K562 (cell line): ENCODE measurements at regions of chr1 and their contacts with region 1.

Region 1: DNA sequence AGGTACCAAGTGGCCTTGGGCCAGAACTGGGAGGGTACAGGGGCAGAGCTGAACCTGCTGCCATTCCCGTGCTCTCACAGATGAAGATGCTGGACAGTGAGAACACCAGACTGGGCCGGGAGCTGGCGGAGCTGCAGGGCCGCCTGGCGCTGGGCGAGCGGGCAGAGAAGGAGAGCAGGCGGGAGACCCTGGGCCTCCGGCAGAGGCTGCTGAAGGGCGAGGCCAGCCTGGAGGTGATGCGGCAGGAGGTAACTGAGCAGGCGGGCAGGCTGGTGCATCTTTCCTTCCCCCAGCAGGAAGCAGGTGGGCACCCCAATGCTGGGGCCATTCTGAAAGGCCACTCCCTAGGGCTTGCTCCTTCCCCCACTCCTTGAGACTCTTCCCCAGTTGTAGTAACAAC is 21.9 kb downstream of the MFAP2 start:
- DNase-seq: no peak
- ATAC-seq: no peak
- H3K4me3 ChIP-seq: no peak overlapping the region
- H3K27ac ChIP-seq: no peak overlapping the region
- H3K4me1 ChIP-seq: peaks cover 0 to 33% of the 10 kb centered on the region in 2 experiments; a peak in 2 of 5 replicates
- H3K27me3 ChIP-seq: peaks cover 15 to 32% of the 10 kb centered on the region in 2 experiments; a peak in 4 of 5 replicates
- CTCF ChIP-seq: no peak
- EP300 ChIP-seq: no peak
- POLR2A ChIP-seq: no peak
- RAD21 ChIP-seq: no peak

Region 2: DNA sequence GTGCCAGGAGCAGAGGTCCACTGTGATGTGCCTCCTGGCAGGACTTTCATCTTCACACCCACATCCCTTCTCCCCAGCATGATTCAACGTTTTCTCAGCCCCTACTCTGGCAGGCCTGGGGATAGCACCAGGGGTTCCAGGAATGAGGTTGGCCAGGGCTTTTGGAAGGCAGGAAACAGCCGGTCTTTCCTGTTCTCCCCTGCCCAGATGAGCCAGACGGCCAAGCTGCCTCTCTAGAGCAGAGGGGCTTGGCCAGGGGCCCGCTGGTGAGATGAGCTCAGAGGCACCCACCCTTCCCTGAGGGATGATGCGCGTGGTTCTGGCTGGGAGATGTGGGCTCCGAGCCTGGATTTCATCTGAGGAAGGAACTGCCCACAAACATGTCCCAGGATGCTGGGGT is 26.2 kb after region 1 on chr1:
- CTCF ChIA-PET with region 1: no interaction called
- POLR2A ChIA-PET with region 1: no interaction called
- in situ Hi-C with region 1: no loop called
- intact Hi-C with region 1: no loop called
- DNase-seq: no peak
- ATAC-seq: no peak
- H3K4me3 ChIP-seq: no peak overlapping the region
- H3K27ac ChIP-seq: no peak overlapping the region
- H3K4me1 ChIP-seq: peaks cover 0 to 23% of the 10 kb centered on the region in 2 experiments; a peak in 2 of 5 replicates
- H3K27me3 ChIP-seq: peaks cover 12 to 15% of the 10 kb centered on the region in 2 experiments; a peak in 3 of 5 replicates
- CTCF ChIP-seq: no peak
- EP300 ChIP-seq: no peak
- POLR2A ChIP-seq: no peak
- RAD21 ChIP-seq: no peak

Region 3: DNA sequence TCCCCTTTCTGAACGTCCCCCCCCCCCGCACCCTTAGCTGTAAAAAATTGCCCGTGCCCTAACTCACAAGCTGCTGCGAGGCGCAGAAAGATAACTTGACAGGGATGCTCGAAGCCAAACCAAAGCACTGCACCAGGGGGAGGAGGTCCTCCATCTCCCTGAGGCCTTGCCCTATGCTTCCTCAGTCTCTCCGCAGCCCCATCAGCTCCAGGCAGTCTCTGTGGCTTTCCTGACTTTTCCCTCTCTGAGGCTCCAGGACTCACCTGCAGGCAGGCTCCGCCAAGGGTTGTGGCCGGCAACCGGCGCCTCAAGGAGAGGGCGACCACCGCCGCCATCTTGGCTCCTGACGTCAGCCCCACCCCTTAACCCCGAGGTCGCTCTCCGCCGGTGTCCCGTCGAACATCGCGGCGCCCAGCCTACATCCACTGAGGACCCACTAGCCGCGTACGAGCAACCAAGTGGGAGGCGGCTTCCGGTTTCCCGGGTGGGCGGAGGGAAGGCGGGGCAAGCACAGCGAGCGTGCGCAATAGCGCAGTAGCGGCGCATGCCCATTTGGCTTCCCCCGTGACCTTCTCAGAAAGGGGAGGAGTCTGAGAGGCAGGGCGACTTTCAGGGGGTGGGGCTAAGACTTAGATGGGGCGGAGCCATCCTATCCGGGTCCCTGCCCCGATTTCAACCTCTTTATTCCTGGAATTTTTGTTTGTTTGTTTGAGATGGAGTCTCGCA is 95.3 kb after region 1 on chr1 and contains the start of gene SDHB:
- CTCF ChIA-PET with region 1: no interaction called
- POLR2A ChIA-PET with region 1: no interaction called
- in situ Hi-C with region 1: loop called (anchors 5 kb)
- intact Hi-C with region 1: no loop called
- DNase-seq: peak; percentile 99
- ATAC-seq: peak; percentile 99
- H3K4me3 ChIP-seq: peak within 1 kb of the TSS; percentile 53
- H3K27ac ChIP-seq: peak within 1 kb of the TSS; percentile 80
- H3K4me1 ChIP-seq: peaks cover 0 to 15% of the 10 kb centered on the region in 2 experiments; a peak in 3 of 5 replicates
- H3K27me3 ChIP-seq: peaks cover 5 to 8% of the 10 kb centered on the region in 2 experiments; a peak in 3 of 5 replicates
- CTCF ChIP-seq: 0 out of 6 replicates have a peak, but pooled peaks of 1 of the 3 experiments have one; percentile 0
- EP300 ChIP-seq: peak; percentile 48
- POLR2A ChIP-seq: peak; percentile 94
- RAD21 ChIP-seq: no peak
- polyA plus RNA-seq, gene SDHB: 207 to 339 TPM